ENCODE measurements at regions of chr11 and their contacts with region 1.

Region 1: DNA sequence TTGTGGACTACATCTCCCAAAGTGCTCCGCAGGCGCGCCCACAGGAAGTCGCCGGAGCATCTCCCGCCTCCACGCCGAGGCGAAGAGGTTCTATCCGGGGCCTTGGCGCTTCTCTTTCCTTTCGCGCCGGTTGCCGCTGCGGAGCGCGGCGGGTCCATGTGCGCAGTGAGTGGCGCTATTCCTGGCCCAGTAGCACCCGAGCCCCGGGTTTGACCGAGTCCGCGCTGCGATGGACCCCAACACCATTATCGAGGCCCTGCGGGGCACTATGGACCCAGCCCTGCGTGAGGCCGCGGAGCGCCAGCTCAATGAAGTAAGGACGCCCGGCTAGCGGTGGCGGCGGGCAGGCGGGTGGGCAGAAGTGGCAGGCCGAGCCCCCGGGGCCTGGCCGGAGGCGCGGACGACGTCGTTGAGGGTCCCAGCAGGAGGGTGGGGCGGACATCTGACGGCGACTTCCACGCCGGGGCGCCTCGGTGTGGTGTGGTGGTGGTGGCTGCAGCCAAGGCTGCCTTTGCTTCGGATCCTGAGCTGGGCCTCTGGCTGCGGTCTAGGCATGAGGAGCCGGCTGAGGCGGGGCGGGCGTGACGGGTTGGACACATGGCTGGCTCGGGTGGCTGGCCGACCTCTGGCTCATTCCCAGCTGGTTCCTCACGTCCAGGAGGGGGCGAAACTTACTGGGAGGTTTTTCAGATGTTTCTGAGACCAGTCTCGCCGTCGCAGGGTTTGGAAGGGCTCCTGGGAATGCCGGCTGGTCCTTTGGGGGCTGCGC is at the start of gene IPO7:
- DNase-seq: peak; percentile 93
- H3K4me3 Mint-ChIP-seq: peak within 1 kb of the TSS; percentile 96
- H3K27ac Mint-ChIP-seq: peak within 1 kb of the TSS; percentile 87
- H3K4me1 Mint-ChIP-seq: peaks cover 29% of the 10 kb centered on the region
- H3K27me3 Mint-ChIP-seq: no peaks in the 10 kb centered on the region
- total RNA-seq, gene IPO7: 161 to 172 TPM

Region 2: DNA sequence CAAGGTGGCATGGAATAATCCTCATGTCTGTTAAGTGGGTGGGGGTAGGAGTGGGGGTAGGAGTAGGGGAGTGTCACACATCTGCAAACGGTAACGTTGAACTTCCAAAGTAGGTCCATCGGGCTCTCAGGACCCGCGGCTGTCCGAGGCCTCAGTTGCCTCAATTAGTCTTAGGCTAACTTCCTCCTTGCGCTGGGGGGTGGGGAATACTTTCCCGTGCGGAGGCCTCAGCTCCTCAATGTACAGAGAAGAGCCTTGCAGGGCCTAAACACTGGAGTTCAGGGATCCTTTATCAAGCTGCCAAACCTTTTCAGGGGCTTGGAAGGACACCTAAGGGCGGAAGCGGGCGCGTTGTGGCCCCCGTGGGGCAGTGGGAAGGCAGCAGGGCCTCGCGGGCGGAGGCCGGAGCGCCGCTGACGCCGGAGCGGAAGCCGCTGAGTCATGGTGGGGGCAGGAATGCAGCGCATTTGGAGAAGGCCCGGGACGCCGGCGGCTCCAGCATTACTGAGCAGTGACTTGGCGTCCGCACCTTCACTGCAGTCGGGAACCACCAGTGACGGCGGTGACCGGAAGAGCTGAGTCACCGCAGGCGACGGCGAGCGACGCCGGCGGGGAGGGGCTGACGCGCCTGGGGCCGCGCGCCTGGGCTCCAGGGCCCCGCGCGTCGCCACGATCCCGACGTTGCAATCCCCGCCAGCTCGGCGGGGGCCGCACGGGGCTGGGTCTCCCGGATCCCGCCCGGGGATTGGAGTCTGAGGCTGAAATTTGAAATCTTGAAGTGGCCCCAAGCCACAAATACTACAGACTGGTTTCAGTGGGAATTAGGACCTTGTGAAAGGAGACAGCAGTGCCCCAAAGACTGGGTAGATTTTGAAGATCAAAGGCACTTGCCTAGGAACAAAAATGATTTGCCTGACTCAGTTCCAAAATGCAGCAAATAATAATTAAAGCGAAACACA is 20.5 kb before region 1 on chr11:
- CTCF ChIA-PET with region 1: interaction called, 7 read pairs
- POLR2A ChIA-PET with region 1: interaction called, 31 read pairs
- intact Hi-C with region 1: loop called (anchors 1 kb)
- DNase-seq: peak; percentile 93
- H3K4me3 Mint-ChIP-seq: peak overlapping the region; percentile 74
- H3K27ac Mint-ChIP-seq: peak overlapping the region; percentile 88
- H3K4me1 Mint-ChIP-seq: peaks cover 35% of the 10 kb centered on the region
- H3K27me3 Mint-ChIP-seq: no peaks in the 10 kb centered on the region